ENCODE measurements at regions of chr2 and their contacts with region 1.

Region 1: DNA sequence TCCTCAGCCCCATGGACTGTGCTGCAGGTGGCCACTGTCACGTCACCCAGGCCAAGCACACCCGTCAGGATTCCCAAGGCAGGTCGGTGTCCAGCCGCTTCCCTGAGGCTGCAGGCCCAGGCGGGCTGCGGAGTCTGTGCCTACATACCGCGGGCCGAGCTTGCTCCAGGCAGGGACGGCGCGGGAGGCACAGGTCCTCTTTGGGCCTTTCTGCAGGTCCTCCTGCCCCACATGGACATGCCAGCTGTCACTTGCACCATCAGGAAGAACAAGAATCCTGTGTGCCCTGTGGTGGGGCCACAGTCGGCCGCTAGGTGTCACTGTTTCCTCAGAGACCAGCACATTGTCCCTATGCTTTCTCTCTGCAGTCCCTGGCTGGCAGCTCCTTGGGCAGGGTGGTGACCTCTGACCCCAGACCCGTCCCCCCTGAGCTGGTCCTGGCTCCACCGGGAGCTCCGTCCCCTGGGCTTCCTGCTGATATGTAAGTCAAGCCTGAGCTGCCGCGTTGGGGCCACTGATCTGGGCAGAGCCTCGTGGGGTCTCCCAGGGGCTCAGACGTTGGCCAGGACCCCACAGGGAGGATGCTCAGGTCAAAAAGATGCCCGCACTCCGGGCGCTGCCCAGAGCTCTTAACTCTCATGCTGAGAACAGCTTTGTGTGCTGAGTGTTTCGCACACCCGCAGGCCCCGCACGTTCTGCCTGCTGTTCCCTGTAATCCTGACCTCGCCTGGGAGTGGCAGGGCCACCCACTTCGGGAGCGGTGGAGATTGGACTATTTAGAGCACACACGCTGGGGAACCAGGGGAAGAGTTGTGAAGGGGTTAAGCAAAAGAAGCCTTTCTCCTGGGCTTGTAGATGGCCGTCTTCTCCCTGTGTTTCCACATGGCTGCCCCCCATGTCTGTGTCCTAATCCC is 17.3 kb upstream of the AGXT start:
- DNase-seq: peak; percentile 93
- H3K4me3 ChIP-seq: no peak overlapping the region; a peak in 1 of 4 replicates
- H3K27ac ChIP-seq: no peak overlapping the region
- H3K4me1 ChIP-seq: no peaks in the 10 kb centered on the region
- H3K27me3 ChIP-seq: no peaks in the 10 kb centered on the region
- CTCF ChIP-seq: peak; percentile 83
- EP300 ChIP-seq: no peak
- RAD21 ChIP-seq: peak; percentile 96

Region 2: DNA sequence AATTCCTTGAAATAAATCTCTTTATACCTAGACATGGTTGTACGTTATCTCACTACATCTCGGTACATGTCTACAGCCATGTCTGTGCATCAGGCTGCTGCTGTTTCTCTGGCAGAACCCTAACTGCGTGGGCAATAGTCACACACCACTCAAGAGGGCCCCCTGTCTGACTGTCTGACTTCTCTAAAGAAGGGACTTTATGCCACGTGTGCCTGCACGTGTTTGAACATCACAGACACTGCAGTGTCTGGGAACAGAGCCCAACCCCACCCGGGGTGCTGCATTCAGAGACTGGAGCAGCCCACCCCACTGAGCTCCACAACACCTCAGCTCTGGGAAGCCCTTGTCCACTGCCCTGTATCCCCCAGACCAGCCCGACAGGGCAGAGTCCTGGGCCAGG is 86.3 kb before region 1 on chr2:
- CTCF ChIA-PET with region 1: no interaction called
- POLR2A ChIA-PET with region 1: no interaction called
- DNase-seq: no peak
- H3K4me3 ChIP-seq: no peak overlapping the region
- H3K27ac ChIP-seq: no peak overlapping the region
- H3K4me1 ChIP-seq: no peaks in the 10 kb centered on the region; a peak in 1 of 4 replicates
- H3K27me3 ChIP-seq: no peaks in the 10 kb centered on the region
- CTCF ChIP-seq: no peak
- EP300 ChIP-seq: no peak
- RAD21 ChIP-seq: no peak

Region 3: DNA sequence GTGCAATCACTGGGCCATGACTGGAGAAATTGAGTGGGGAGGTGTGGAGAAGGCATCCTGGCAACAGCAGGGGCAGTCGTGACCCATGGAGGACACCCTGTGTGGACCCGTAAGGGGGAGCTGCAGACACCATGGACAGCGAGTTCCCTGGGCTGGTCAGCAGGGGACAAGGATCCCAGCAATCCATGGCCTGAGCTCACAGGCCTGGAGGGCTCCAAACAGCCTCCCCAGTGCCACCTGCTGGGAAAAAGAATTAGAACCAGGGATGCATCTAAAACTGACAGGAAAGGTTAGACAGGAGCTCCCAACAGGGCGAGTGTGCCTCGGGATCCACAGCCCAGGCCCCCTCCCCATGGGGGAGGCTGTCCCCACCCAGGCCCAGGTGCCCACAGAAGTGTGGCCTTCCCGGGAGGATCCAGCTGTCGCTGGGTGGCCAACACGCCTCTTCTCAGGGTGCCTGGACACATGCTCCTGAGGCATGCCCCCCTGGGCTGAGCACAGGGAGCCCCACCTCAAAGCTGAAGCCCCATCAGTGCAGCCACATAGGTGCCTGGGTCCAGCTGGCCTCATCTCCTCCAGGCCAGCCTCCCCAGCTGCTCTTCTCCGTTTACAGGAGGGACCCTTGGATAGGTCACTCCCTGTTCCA is 10.8 kb before region 1 on chr2:
- CTCF ChIA-PET with region 1: interaction called, 71 read pairs
- POLR2A ChIA-PET with region 1: no interaction called
- DNase-seq: peak; percentile 96
- H3K4me3 ChIP-seq: no peak overlapping the region
- H3K27ac ChIP-seq: no peak overlapping the region
- H3K4me1 ChIP-seq: peaks cover 0 to 19% of the 10 kb centered on the region in 2 experiments; a peak in 1 of 4 replicates
- H3K27me3 ChIP-seq: no peaks in the 10 kb centered on the region; the same call in 1 of the 2 replicates
- CTCF ChIP-seq: peak; percentile 63
- EP300 ChIP-seq: no peak
- RAD21 ChIP-seq: peak; percentile 85

Region 4: DNA sequence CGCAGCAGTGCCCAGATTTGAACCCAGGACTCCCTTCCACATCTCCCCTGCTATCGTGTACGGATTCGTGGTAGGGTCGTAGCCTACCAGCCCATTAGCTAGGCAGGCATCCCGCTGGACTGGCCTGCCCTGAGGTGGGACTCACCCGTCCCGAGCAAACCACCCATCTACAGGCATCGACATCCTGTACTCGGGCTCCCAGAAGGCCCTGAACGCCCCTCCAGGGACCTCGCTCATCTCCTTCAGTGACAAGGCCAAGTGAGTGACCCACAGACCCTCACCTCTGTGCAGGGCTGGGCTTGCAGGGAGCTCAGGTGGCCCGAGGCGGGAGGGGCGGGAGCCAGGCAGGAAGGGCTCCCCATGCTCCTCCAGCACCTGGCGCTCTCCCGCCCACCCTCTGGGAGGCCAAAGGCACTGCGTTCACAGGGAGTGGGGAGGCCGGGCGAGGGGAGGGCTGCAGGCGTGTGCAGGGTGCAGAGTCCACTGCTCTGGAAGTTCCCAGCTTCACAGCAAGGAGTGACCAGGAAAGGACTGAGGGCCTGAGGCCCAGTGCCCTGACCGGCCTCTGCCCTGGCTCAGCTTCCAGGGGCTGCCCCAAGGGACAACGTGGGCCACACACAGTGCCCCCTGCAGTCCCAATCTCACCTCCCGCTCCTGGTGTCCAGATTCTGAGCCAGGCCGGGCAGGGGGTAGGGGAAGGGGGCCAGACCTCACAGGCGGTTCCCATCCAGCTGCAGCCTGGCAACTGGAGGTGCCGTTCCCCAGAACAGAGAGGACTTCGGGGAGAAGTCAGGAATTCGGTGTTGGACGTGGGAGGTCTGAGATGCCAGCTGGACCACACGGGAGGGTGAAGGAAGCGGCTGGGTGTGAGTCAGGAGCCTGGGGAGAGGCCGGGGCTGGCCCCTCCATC is 22.7 kb after region 1 on chr2:
- CTCF ChIA-PET with region 1: interaction called, 20 read pairs
- POLR2A ChIA-PET with region 1: no interaction called
- DNase-seq: peak; percentile 43
- H3K4me3 ChIP-seq: no peak overlapping the region
- H3K27ac ChIP-seq: no peak overlapping the region
- H3K4me1 ChIP-seq: peaks cover 0 to 8% of the 10 kb centered on the region in 2 experiments; a peak in 1 of 4 replicates
- H3K27me3 ChIP-seq: no peaks in the 10 kb centered on the region
- CTCF ChIP-seq: no peak
- EP300 ChIP-seq: no peak
- RAD21 ChIP-seq: no peak

Region 5: GRCh38 chr2:240893363-240893844 is 42.1 kb after region 1 on chr2:
- CTCF ChIA-PET with region 1: interaction called, 29 read pairs
- POLR2A ChIA-PET with region 1: no interaction called
- DNase-seq: no peak
- H3K4me3 ChIP-seq: no peak overlapping the region
- H3K27ac ChIP-seq: no peak overlapping the region
- H3K4me1 ChIP-seq: peaks cover 0 to 15% of the 10 kb centered on the region in 2 experiments; a peak in 1 of 4 replicates
- H3K27me3 ChIP-seq: no peaks in the 10 kb centered on the region
- CTCF ChIP-seq: no peak
- EP300 ChIP-seq: no peak
- RAD21 ChIP-seq: no peak

Region 6: GRCh38 chr2:240913810-240914644 is 62.7 kb after region 1 on chr2:
- CTCF ChIA-PET with region 1: interaction called, 22 read pairs
- POLR2A ChIA-PET with region 1: no interaction called
- DNase-seq: peak; percentile 94
- H3K4me3 ChIP-seq: peak overlapping the region in 1 of 2 experiments; percentile 40; a peak in 1 of 4 replicates
- H3K27ac ChIP-seq: no peak overlapping the region; a peak in 1 of 4 replicates
- H3K4me1 ChIP-seq: peaks cover 3 to 52% of the 10 kb centered on the region in 2 experiments; a peak in 1 of 4 replicates
- H3K27me3 ChIP-seq: no peaks in the 10 kb centered on the region
- CTCF ChIP-seq: peak; percentile 93
- EP300 ChIP-seq: no peak
- RAD21 ChIP-seq: peak; percentile 82

Region 7: GRCh38 chr2:241081643-241082340 is 230.5 kb after region 1 on chr2:
- CTCF ChIA-PET with region 1: interaction called, 13 read pairs
- POLR2A ChIA-PET with region 1: no interaction called
- DNase-seq: peak; percentile 32
- H3K4me3 ChIP-seq: no peak overlapping the region
- H3K27ac ChIP-seq: peak overlapping the region in 1 of 2 experiments; percentile 28; a peak in 1 of 4 replicates
- H3K4me1 ChIP-seq: peaks cover 0 to 13% of the 10 kb centered on the region in 2 experiments; a peak in 1 of 4 replicates
- H3K27me3 ChIP-seq: no peaks in the 10 kb centered on the region
- CTCF ChIP-seq: no peak
- EP300 ChIP-seq: no peak
- RAD21 ChIP-seq: no peak

Region 8: DNA sequence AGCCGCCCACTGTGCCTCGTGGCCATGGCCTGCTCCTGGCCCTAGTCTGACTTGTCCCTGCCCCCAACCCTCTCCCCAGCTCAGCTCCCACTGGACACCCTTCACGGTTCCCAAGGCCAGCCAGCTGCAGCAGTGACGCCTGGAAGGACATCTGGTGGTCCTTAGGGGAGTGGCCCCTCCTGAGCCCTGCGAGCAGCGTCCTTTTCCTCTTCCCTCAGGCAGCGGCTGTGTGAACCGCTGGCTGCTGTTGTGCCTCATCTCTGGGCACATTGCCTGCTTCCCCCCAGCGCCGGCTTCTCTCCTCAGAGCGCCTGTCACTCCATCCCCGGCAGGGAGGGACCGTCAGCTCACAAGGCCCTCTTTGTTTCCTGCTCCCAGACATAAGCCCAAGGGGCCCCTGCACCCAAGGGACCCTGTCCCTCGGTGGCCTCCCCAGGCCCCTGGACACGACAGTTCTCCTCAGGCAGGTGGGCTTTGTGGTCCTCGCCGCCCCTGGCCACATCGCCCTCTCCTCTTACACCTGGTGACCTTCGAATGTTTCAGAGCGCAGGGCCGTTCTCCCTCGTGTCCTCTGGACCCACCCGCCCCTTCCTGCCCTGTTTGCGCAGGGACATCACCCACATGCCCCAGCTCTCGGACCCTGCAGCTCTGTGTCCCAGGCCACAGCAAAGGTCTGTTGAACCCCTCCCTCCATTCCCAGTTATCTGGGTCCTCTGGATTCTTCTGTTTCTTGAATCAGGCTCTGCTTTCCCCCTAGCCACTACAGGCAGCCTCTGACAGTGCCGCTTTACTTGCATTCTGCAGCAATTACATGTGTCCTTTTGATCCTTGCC is 372.9 kb after region 1 on chr2:
- CTCF ChIA-PET with region 1: interaction called, 10 read pairs
- POLR2A ChIA-PET with region 1: no interaction called
- DNase-seq: peak; percentile 91
- H3K4me3 ChIP-seq: no peak overlapping the region
- H3K27ac ChIP-seq: peak overlapping the region; percentile 6 to 56; a peak in 3 of 4 replicates
- H3K4me1 ChIP-seq: peaks cover 11 to 26% of the 10 kb centered on the region in 2 experiments; a peak in 2 of 4 replicates
- H3K27me3 ChIP-seq: no peaks in the 10 kb centered on the region
- CTCF ChIP-seq: no peak
- EP300 ChIP-seq: peak in 1 of 2 experiments; percentile 46; a peak in 1 of 4 replicates
- RAD21 ChIP-seq: peak; percentile 40